ENCODE measurements at regions of chr17 and their contacts with region 1.

Region 1: DNA sequence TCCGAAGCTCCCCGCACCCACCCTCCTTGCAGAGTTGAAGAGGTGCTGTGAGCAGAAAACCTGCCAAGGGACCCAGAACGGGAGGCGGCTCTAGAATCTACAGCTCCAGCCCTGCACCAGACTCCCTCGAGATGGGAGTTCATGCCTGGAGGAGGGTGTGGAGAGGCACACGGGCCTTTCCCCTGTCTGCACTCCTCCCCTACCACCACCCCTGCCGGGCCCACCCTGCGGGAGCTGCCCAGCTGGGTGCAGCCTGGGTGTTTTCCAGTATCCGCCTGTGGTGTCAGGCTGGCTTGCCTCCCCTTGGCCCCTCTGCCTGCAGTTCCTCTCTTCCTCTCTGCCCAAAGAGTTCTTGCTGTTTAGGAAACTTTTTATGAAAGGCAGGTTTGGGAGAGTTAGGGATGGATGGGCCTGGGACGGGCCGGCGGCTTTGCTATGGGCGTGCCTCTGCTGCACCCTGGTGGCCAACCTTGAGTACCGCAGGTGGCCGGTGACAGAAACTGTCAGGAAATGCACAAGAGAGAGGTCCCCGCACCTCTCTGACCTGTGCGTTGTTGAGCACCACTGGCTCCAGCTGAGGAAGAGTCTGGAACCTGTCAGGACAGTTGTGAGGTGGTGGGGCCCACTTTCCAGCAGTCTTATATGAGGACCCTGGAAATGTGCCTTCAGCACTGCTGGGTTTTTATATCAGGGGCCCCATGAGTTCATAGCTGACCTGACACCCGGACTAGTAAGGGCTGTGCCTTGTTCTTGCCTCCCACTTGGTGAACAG is 354.1 kb downstream of the SEC14L1 start:
- DNase-seq: peak; percentile 77
- ATAC-seq: peak; percentile 74
- H3K4me3 Mint-ChIP-seq: no peak overlapping the region
- H3K27ac Mint-ChIP-seq: peak overlapping the region; percentile 58
- H3K4me1 Mint-ChIP-seq: peaks cover 21% of the 10 kb centered on the region
- H3K27me3 Mint-ChIP-seq: no peaks in the 10 kb centered on the region

Region 2: DNA sequence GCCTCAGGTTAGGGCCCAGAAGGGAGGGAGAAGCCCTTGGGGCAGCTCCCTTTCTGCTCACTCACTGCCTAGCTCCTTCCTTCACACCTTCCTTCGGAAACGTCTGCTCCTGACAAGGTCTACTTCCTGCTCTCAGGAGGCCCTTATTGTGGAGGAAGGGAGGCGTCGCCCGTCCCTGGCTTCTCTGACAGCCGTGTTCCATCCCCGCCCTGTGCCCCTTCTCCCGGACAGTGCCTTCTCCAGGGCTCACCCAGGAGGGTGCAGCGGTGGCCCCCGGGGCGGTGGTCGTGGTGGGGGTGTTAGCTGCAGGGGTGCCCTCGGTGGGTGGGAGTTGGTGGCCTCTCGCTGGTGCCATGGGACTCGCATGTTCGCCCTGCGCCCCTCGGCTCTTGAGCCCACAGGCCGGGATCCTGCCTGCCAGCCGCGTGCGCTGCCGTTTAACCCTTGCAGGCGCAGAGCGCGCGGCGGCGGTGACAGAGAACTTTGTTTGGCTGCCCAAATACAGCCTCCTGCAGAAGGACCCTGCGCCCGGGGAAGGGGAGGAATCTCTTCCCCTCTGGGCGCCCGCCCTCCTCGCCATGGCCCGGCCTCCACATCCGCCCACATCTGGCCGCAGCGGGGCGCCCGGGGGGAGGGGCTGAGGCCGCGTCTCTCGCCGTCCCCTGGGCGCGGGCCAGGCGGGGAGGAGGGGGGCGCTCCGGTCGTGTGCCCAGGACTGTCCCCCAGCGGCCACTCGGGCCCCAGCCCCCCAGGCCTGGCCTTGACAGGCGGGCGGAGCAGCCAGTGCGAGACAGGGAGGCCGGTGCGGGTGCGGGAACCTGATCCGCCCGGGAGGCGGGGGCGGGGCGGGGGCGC is 122.2 kb before region 1 on chr17:
- CTCF ChIA-PET with region 1: interaction called, 11 read pairs
- DNase-seq: peak; percentile 82
- ATAC-seq: peak; percentile 57
- H3K4me3 Mint-ChIP-seq: peak overlapping the region; percentile 66
- H3K27ac Mint-ChIP-seq: peak overlapping the region; percentile 73
- H3K4me1 Mint-ChIP-seq: peaks cover 44% of the 10 kb centered on the region
- H3K27me3 Mint-ChIP-seq: no peaks in the 10 kb centered on the region

Region 3: GRCh38 chr17:77444984-77445759 is 49.7 kb before region 1 on chr17:
- CTCF ChIA-PET with region 1: interaction called, 18 read pairs
- DNase-seq: peak; percentile 95
- ATAC-seq: peak; percentile 62
- H3K4me3 Mint-ChIP-seq: peak overlapping the region; percentile 73
- H3K27ac Mint-ChIP-seq: peak overlapping the region; percentile 93
- H3K4me1 Mint-ChIP-seq: peaks cover 93% of the 10 kb centered on the region
- H3K27me3 Mint-ChIP-seq: no peaks in the 10 kb centered on the region

Region 4: DNA sequence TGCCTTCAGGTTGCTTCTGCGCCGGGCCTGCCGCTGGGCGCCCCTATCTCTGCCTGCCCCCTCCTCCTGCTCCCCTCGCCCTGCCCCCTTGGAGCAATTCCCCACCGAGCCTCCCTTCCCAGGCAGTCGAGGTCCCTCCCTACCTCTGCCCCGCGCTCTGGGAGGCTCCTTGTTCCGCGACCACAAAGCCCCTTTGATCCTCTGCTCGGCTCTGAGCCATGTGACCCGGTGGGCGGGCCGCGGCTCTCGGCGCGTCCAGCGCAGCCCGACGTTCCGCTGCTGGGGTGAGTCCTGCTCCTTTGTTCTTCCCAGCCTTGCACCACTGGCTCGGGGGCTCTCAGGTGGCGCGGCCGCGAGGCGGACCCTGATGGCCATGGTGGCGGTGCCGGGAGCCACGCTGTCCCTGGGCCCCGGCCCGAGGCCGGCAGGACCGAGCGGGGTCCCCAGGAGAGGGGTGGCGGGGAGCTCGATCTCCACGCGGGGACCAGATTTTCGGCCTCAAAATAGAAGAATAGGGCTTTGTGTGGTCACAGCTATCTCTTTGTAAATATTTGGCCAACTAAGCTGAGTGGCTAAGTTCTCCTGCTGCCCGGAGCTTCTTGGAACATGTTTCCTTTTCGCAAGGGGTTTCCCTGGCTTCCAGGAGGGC is 43.5 kb before region 1 on chr17:
- CTCF ChIA-PET with region 1: interaction called, 22 read pairs
- DNase-seq: peak; percentile 76
- ATAC-seq: peak; percentile 54
- H3K4me3 Mint-ChIP-seq: peak overlapping the region; percentile 86
- H3K27ac Mint-ChIP-seq: peak overlapping the region; percentile 99
- H3K4me1 Mint-ChIP-seq: peaks cover 64% of the 10 kb centered on the region
- H3K27me3 Mint-ChIP-seq: no peaks in the 10 kb centered on the region

Region 5: DNA sequence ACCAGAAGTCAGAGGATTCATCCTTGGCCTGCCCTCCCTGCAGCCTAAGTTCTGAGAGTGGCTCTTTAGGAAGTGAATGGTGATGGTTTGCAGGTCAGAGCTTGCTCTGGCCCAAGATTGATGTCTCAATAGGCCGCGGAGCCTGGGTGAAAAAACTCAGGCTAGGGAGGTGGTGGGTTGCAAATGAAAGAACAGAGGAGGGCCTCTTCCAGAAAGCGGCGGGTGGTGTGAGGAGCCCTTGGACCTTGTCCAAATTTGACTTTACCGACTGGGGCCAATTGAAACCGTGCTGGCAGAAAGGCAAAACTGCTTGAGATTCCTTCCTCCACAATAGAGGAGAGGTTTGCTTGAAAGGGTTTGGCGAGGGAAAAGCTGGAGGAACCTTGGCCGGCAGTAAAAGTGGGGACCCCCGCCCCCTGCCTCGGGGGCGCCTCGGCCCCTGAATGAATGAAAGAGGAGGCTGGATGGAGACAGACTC is 22.8 kb before region 1 on chr17:
- CTCF ChIA-PET with region 1: interaction called, 18 read pairs
- DNase-seq: no peak
- ATAC-seq: no peak
- H3K4me3 Mint-ChIP-seq: peak overlapping the region; percentile 20
- H3K27ac Mint-ChIP-seq: peak overlapping the region; percentile 80
- H3K4me1 Mint-ChIP-seq: peaks cover 91% of the 10 kb centered on the region
- H3K27me3 Mint-ChIP-seq: no peaks in the 10 kb centered on the region